Right ventricle myocardium inferior (tissue), 1 donor: ENCODE measurements at regions of chr6 and their contacts with region 1.

Region 1: DNA sequence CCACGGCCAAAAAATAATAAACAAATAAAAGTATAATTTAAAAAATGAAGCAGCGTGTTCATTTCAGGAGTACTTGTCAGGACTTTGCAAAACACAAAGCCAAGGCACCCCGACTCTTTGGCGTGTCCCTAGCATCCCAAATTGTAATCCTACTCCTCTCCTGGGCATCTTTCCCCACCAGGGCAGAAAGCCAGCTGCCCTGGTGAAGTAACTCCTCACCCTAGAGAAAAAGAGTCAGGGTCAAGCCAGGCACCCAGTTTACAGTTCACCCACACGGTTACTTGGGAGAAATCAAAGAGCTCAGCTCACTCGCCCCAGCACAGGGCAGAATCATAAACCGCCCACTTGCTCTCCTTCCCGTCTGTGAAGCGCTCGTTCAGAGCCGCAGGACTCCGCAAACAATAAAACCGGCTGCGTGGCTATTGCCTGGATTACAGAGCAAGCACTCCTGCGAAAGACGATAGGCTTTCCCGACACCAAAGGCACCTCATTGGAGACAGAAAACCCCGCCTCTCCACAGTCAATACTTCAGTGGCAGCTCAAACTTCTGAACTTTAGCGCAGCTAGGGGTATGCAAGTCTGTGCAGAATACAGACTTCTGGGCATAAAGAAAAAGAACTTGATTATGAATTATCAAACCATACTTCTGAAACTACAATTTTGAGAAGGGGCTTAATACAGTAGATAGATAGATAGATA is 73.0 kb upstream of the NHSL1 start:
- DNase-seq: peak; percentile 70
- ATAC-seq: peak; percentile 89

Region 2: DNA sequence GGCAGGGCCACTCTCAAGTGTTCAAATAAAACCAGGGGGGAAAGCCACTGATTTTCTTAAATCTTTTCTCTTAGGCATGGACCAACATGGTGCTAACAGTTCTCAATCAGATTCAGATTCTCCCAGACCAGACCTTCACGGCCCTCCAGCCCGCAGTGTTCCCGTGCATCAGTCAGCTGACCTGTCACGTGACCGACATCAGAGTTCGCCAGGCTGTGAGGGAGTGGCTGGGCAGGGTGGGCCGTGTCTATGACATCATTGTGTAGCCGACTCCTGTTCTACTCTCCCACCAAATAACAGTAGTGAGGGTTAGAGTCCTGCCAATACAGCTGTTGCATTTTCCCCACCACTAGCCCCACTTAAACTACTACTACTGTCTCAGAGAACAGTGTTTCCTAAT is 236.1 kb before region 1 on chr6:
- intact Hi-C with region 1: no loop called
- DNase-seq: no peak
- ATAC-seq: no peak

Region 3: DNA sequence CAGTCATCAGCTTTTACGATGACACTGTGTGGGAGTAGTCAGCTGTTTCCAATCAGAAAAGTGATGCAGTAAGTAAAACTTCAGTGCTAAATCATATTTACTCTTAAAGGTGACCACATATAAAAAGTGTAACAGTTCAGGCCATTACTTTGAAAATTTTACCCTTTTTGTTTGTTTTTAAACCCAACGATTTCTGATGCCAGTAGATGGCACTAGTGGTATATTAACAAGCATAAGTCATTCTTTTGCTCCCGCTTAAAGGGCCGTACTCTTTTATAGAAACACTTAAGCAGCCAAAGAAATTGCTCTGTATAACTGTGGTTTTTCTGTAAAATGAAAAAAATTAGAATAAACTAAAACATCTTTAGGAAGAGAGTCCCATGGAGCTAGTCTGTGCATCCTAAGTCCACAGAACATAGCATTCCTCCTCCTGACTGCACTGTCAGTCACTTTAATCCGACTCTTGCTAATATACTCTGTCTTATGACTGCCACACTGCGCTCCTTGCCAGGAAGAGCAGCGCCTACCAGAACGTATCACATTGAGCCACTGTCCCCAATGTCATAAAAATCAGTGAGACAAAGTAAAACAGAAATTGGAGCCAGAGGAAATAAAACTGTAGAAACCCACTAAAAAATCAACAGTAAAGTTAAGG is 143.2 kb before region 1 on chr6:
- intact Hi-C with region 1: loop called (anchors 5 kb)
- DNase-seq: no peak
- ATAC-seq: peak; percentile 30

Region 4: DNA sequence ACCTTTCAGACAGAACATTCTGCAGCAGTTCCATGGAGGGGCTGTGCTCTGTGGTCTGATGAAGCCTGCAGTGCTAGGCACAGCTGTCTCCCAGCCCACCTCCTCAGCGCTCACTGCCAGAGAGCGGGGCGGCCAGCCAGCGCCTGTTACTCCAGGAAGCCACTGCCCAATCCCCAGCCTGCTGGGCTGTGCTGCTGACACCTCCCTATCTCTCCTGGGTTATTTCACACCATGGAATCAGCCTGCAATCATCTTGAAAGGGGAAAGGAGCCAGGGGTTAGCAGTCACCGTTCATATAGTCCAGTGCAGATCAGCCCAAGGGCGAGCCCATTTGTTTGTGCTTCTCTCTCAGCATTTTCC is 26.7 kb before region 1 on chr6:
- intact Hi-C with region 1: loop called (anchors 2 kb)
- DNase-seq: peak; percentile 90
- ATAC-seq: peak; percentile 94

Region 5: GRCh38 chr6:138654715-138655634 is 82.7 kb after region 1 on chr6:
- intact Hi-C with region 1: no loop called
- DNase-seq: no peak
- ATAC-seq: no peak